ENCODE measurements at regions of chr3 and their contacts with region 1.

Region 1: GRCh38 chr3:58532794-58533220 is 4.2 kb downstream of the ACOX2 start:
- DNase-seq: peak; percentile 73 to 81
- ATAC-seq: peak; percentile 82 to 95 (median 86)
- H3K4me3 ChIP-seq: no peak overlapping the region
- H3K27ac ChIP-seq: no peak overlapping the region
- H3K4me1 ChIP-seq: peaks cover 18% of the 10 kb centered on the region
- H3K27me3 ChIP-seq: no peaks in the 10 kb centered on the region
- CTCF ChIP-seq: peak; percentile 94

Region 2: DNA sequence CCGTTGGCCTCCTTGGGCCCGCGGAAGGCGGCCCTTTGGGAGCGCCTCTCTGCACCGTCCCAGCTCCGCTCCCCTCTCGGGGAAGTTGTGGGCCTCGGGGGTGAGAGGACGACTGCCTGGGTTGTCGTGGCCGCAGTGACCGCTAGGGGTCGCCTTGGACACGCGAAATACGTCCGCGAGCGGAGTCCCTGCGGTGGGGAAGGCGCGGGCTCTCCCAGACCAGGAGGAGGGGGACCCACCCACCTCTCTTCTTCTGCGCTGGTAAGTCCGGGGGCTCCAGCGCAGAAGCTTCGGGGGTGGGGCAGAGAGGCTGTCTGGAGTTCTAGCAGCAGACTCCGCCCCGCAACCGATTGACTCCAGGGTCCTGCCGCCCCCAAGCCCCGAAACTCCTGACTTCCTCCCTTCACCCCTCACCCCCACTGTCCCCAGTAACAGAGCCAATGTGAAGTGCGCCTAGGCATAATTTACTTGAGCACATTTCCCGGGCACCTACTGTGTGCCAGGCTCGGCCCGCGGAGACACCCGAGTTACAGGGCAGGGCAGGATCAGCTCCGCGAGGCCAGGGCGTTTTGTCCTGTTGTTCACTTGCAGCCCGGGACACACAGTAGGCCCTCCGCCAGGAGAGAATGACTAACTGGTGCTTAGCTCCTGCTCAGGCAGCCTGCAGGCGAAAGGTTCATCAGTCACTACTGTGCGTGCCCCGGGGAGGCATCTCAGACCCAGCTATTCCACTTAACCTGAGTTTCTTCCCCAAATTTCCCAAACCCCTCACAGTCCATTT is 354.9 kb before region 1 on chr3:
- intact Hi-C with region 1: loop called in 1 of 2 experiments (anchors 10 kb)
- DNase-seq: peak; percentile 90 to 95
- ATAC-seq: peak; percentile 93 to 99 (median 94)
- H3K4me3 ChIP-seq: peak overlapping the region; percentile 61
- H3K27ac ChIP-seq: no peak overlapping the region
- H3K4me1 ChIP-seq: peaks cover 3% of the 10 kb centered on the region
- H3K27me3 ChIP-seq: no peaks in the 10 kb centered on the region
- CTCF ChIP-seq: peak; percentile 94

Region 3: DNA sequence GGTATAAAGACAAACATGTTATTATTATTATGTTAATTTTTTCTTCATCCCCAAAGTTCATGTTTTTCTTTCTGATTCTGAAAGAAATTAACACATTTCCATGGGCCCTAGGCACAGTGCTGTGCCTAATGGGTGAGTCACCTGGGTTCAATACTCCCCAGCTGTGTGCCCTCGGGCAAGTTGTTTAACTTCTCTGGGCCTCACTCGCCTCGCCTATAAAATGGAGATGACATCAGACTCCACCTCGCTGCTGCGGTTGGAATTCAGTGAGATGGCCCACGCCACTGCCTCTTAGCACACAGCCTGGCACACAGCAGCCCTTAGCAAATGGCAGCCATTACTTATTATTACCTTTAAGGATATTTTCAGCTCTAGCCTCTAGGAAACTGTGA is 344.6 kb before region 1 on chr3:
- intact Hi-C with region 1: loop called in 1 of 2 experiments (anchors 5 kb)
- DNase-seq: no peak
- ATAC-seq: no peak
- H3K4me3 ChIP-seq: no peak overlapping the region
- H3K27ac ChIP-seq: no peak overlapping the region
- H3K4me1 ChIP-seq: no peaks in the 10 kb centered on the region
- H3K27me3 ChIP-seq: no peaks in the 10 kb centered on the region
- CTCF ChIP-seq: no peak

Region 4: DNA sequence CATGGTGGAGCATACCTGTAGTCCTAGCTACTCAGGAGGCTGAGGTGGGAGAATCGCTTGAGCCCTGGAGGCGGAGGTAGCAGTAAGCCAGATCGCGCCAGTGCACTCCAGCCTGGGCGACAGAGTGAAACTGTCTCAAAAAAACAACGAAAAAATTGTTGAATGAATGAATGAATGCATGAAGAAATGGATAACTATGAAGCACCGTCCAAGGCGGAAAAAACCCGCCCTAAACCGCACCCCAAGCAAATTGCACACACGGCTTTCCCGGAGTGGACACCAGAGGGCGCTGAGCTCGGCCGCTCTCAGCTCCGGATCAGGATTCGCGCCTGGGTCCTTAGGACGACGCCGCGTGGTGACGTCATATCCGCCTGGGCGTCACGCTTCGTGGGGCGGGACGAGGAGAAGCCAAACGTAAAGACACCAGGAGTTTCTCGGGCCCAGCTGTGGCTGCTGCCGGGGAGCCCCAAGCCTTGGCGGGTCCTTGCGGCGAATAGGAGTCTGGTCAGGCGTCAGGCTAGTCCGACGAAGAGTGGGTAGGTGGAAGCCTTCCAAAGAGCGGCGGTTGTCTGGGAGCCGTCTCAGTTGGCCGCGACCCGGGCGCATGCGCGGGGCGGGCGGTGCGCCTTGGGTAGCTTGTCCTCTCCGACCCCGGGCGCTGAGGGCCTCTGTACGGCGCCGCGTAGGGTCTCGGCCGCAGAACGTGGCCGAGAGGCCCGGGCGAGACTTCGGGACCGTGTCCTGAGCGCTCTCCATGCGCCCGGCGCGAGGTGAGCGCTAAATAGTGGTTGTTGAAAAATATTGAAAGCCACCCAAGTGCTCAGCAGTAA is 226.7 kb before region 1 on chr3 and contains the starts of genes HTD2 and RPP14:
- intact Hi-C with region 1: loop called in 1 of 2 experiments (anchors 5 kb)
- DNase-seq: peak; percentile 98 to 100
- ATAC-seq: peak; percentile 93 to 95 (median 94)
- H3K4me3 ChIP-seq: peak within 1 kb of the TSS; percentile 81
- H3K27ac ChIP-seq: peak within 1 kb of the TSS; percentile 92
- H3K4me1 ChIP-seq: peaks cover 27% of the 10 kb centered on the region
- H3K27me3 ChIP-seq: no peaks in the 10 kb centered on the region
- CTCF ChIP-seq: peak; percentile 96
- total RNA-seq, gene HTD2: 12.0 to 17.9 (median 15.8) TPM
- total RNA-seq, gene RPP14: 24.9 to 35.0 (median 30.0) TPM

Region 5: DNA sequence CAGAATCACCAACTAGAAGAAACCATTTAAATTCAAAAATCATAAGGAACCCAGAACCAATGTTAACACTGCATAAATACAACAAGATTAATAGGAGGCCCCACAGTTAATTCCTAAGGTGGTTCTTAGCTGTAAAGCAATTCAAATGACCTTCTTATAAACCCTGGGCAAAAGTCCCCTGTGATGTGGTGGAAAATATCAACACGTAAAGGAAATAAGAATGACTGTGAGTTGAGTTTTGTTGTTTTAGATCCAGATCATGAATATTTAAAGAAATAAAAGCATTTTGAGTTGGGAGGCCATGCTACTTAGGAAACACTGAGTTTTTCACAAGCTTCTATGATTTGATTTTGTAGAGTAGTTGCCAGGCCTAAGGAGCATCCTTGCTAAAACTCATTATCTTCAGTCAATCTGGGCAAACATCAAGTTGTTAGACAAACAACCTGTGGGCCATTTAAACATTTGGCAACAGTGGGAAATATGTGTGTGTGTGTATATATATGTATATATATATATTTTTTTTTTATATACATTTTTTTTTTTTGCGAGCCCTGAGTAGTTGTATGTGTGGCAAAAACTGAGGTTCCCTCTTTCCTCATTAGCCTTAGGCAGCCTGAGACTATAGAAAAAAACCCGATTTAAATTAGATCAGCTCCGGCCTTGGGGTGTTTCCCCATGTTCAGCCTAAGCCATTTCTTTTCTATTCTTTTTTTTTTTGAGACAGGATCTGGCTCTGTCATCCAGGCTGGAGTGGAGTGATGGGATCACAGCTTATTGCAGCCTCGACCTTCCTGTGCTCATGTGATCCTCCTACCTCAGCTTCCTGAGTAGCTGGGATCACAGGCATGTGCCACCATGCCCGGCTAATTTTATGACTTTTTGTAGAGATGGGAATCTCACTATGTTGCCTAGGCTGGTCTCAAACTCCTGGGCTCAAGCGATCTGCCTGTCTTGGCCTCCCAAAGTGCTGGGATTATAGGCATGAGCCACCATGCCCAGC is 208.1 kb before region 1 on chr3:
- intact Hi-C with region 1: loop called in 1 of 2 experiments (anchors 5 kb)
- DNase-seq: no peak
- ATAC-seq: no peak
- H3K4me3 ChIP-seq: no peak overlapping the region
- H3K27ac ChIP-seq: no peak overlapping the region
- H3K4me1 ChIP-seq: no peaks in the 10 kb centered on the region
- H3K27me3 ChIP-seq: no peaks in the 10 kb centered on the region
- CTCF ChIP-seq: no peak

Region 6: GRCh38 chr3:58386626-58387365 is 146.0 kb before region 1 on chr3:
- intact Hi-C with region 1: no loop called
- DNase-seq: no peak
- ATAC-seq: peak in 2 of 4 donors; percentile 33 to 61
- H3K4me3 ChIP-seq: no peak overlapping the region
- H3K27ac ChIP-seq: peak overlapping the region; percentile 42
- H3K4me1 ChIP-seq: peaks cover 7% of the 10 kb centered on the region
- H3K27me3 ChIP-seq: no peaks in the 10 kb centered on the region
- CTCF ChIP-seq: no peak

Region 7: GRCh38 chr3:58463181-58463941 is 69.4 kb before region 1 on chr3:
- intact Hi-C with region 1: loop called (anchors 2 kb)
- DNase-seq: peak; percentile 75 to 84
- ATAC-seq: peak; percentile 93 to 98 (median 96)
- H3K4me3 ChIP-seq: peak overlapping the region; percentile 33
- H3K27ac ChIP-seq: no peak overlapping the region
- H3K4me1 ChIP-seq: peaks cover 13% of the 10 kb centered on the region
- H3K27me3 ChIP-seq: no peaks in the 10 kb centered on the region
- CTCF ChIP-seq: peak; percentile 79

Region 8: DNA sequence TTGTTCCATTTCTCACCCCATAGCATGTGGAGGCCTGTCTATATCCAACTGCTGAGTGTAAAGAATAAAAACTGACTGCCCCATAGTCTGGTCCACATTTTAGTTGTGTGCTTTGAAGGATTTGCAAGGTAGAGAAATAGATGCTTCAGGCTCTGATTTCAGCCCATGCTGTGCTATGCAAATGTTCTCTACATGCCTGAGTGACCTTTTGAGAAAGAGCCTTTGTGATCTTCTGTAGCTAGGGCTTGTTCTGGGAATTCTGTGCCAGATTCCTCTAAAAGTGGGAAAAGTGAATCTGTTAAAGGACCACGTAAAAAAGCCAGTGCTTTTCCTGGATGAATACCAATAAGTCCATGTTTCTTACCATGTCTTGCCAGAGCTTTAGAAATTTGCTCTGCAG is 35.7 kb before region 1 on chr3:
- intact Hi-C with region 1: loop called (anchors 2 to 5 kb)
- DNase-seq: no peak
- ATAC-seq: no peak
- H3K4me3 ChIP-seq: no peak overlapping the region
- H3K27ac ChIP-seq: no peak overlapping the region
- H3K4me1 ChIP-seq: peaks cover 53% of the 10 kb centered on the region
- H3K27me3 ChIP-seq: no peaks in the 10 kb centered on the region
- CTCF ChIP-seq: no peak